ENCODE measurements at regions of chr10 and their contacts with region 1.

Region 1: GRCh38 chr10:9302120-9302746 is 1247.7 kb downstream of the GATA3 start:
- DNase-seq: no peak
- H3K4me3 Mint-ChIP-seq: no peak overlapping the region
- H3K27ac Mint-ChIP-seq: no peak overlapping the region
- H3K4me1 Mint-ChIP-seq: no peaks in the 10 kb centered on the region
- H3K27me3 Mint-ChIP-seq: peaks cover 7% of the 10 kb centered on the region

Region 2: GRCh38 chr10:7872041-7872442 is 1430.2 kb before region 1 on chr10:
- CTCF ChIA-PET with region 1: no interaction called
- POLR2A ChIA-PET with region 1: no interaction called
- intact Hi-C with region 1: loop called (anchors 2 kb)
- DNase-seq: no peak
- H3K4me3 Mint-ChIP-seq: peak overlapping the region; percentile 57
- H3K27ac Mint-ChIP-seq: no peak overlapping the region
- H3K4me1 Mint-ChIP-seq: peaks cover 20% of the 10 kb centered on the region
- H3K27me3 Mint-ChIP-seq: no peaks in the 10 kb centered on the region

Region 3: DNA sequence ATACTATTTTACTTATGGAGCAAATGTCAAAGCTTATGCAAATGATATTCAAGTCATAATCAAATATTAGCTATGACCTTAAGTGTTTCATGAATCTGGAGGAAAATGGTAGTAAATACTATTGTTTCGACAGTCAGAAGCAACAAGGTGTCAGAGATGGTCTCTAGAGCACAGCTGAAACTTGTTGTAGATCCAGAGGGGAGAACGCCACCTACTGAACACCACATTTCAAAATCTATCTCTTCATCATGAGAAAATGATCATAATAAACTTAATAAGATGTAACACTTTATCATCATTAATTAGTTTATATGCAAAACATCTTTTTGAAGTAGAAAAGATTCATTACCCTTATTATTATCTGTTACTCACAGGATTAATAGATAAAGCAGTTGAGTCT is 829.0 kb before region 1 on chr10:
- CTCF ChIA-PET with region 1: no interaction called
- POLR2A ChIA-PET with region 1: no interaction called
- intact Hi-C with region 1: loop called (anchors 10 kb)
- DNase-seq: peak; percentile 13
- H3K4me3 Mint-ChIP-seq: no peak overlapping the region
- H3K27ac Mint-ChIP-seq: no peak overlapping the region
- H3K4me1 Mint-ChIP-seq: peaks cover 4% of the 10 kb centered on the region
- H3K27me3 Mint-ChIP-seq: peaks cover 13% of the 10 kb centered on the region

Region 4: GRCh38 chr10:9198611-9199010 is 103.6 kb before region 1 on chr10:
- CTCF ChIA-PET with region 1: no interaction called
- POLR2A ChIA-PET with region 1: no interaction called
- intact Hi-C with region 1: no loop called
- DNase-seq: no peak
- H3K4me3 Mint-ChIP-seq: no peak overlapping the region
- H3K27ac Mint-ChIP-seq: no peak overlapping the region
- H3K4me1 Mint-ChIP-seq: no peaks in the 10 kb centered on the region
- H3K27me3 Mint-ChIP-seq: peaks cover 5% of the 10 kb centered on the region

Region 5: DNA sequence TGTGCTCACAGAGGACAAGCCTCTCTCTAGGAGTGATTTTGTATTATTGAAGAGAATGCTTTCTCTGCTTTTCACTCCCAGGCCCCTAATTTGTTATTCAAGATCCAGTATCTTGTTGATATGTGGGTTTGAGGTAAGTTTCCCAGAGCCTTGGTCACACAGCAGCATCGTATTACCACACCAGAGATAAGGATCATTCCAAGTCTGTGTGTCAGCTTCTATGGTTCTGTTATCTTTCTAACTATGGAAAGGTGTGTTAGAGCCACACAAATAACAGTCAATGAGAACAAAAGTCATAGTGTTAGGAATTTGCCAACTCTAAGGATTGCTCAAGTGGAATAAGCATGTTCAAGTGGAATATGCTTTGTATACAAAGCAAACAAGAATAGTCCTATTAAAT is 39.5 kb before region 1 on chr10:
- CTCF ChIA-PET with region 1: no interaction called
- POLR2A ChIA-PET with region 1: no interaction called
- intact Hi-C with region 1: no loop called
- DNase-seq: no peak
- H3K4me3 Mint-ChIP-seq: no peak overlapping the region
- H3K27ac Mint-ChIP-seq: no peak overlapping the region
- H3K4me1 Mint-ChIP-seq: no peaks in the 10 kb centered on the region
- H3K27me3 Mint-ChIP-seq: peaks cover 12% of the 10 kb centered on the region